Left ventricle myocardium inferior (tissue), 1 donor: ENCODE measurements at regions of chr5 and their contacts with region 1.

Region 1: DNA sequence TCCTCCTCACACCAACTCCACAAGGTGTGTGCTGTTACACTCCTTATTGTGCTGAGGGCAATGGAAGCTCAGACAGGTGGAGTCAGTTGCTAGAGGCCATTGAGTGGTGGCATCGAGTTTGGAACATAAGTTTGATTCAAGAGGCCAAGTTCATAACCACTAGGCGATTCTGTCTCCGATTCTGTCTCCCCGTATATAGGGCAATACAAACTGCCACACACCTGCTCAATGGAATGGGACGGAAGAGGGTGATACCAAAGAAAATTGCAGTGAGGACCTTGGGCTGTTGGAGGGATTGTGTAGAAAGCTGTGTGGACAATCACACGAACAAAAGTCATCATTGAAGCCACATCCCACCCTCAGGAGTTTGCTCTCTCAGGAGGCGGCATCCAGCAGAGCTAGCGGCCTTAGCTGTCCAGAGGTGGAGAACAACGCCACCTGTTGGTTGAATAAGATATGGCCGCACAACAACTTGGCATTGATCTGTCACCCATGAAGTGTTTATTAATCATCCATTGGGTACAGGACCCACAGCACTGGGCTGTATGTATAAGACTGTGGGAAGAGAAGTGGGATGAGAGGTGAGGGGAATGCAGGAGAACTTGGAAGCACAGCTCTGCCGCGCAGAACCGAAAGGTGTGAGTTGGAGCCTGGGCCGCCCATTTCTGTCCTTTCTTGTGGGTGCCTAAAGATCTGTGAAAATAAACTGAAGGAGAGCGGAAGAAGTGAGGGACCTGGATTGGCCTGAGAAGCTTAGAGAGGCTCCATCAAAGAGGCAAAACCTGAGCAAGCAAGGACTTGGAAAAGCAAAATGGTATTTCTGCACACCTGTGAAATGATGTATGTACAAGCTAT is 16.1 kb upstream of the NEUROG1 start:
- DNase-seq: peak; percentile 29
- H3K4me3 ChIP-seq: no peak overlapping the region
- H3K27ac ChIP-seq: no peak overlapping the region
- H3K4me1 ChIP-seq: no peaks in the 10 kb centered on the region
- H3K27me3 ChIP-seq: peaks cover 98% of the 10 kb centered on the region
- CTCF ChIP-seq: peak; percentile 90

Region 2: DNA sequence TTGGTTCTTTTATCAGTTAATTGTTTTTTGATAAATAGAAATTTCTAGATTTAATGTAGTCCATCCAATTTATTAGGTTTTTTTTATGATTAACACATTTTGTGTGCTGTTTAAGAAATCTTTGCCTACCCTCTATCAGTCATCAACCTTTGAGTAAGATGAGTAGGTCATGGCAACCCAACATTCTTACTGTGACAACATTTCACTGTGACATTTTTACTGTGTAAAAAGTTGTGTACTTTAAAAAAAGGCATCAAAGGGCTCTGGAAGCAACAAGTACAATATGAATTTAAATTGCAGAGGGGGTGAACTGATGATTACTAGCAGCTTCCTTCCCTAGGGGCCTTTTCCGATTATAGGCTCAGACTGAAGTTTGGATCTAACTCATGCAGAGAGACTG is 141.5 kb before region 1 on chr5:
- intact Hi-C with region 1: no loop called
- DNase-seq: no peak
- H3K4me3 ChIP-seq: no peak overlapping the region
- H3K27ac ChIP-seq: no peak overlapping the region
- H3K4me1 ChIP-seq: no peaks in the 10 kb centered on the region
- H3K27me3 ChIP-seq: no peaks in the 10 kb centered on the region
- CTCF ChIP-seq: no peak

Region 3: GRCh38 chr5:135466178-135467050 is 85.4 kb before region 1 on chr5:
- intact Hi-C with region 1: loop called (anchors 5 kb)
- DNase-seq: peak; percentile 71
- H3K4me3 ChIP-seq: peak overlapping the region; percentile 60
- H3K27ac ChIP-seq: no peak overlapping the region
- H3K4me1 ChIP-seq: peaks cover 10% of the 10 kb centered on the region
- H3K27me3 ChIP-seq: peaks cover 100% of the 10 kb centered on the region
- CTCF ChIP-seq: peak; percentile 89